Motor neuron (in vitro differentiated cells): ENCODE measurements at regions of chr18 and their contacts with region 1.

Region 1: DNA sequence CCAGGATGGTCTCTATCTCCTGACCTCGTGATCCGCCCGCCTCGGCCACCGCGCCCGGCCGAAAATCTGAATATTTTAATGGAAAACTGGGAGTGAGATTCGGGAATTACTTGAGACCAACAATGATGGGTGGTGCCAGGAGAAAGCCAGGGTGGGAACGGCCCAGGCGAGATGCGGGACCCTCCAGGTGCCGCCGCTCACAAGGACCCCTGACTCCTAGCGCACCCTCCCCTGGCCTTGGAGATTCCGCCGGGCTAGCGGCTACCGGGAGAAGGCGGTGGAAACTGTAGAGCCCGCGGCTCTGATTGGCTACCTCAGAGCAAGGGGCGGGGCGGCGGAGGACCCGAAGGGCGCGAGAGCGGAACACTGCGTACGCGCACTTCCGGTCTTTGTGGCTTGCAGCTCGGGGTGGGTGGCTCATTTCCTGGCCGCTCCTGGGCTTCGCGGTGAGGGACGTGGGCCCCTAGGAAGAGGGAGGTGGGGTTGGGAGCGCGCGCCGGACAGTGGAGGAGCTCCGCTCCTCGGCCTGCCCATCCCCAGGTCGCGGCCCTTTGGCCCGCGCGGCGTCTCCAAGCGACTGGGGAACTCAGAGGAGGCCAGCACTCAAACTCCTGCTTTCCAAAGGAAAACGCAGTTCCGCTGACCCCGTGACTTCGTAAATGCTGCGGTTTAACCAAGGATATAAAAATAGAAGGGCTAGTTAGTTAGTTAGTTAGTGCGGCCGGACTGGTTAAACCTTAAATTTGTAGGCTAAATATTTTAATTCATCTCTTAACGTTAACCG is at the start of gene ZNF397:
- ATAC-seq: peak; percentile 94 to 99 (median 98)
- H3K4me3 ChIP-seq: peak within 1 kb of the TSS; percentile 61 to 97 (median 88)
- H3K27ac ChIP-seq: peak within 1 kb of the TSS; percentile 98 to 99
- H3K4me1 ChIP-seq: peaks cover 10 to 14% of the 10 kb centered on the region in 2 donors
- total RNA-seq, gene ZNF397: 24.1 to 52.5 (median 39.2) TPM

Region 2: DNA sequence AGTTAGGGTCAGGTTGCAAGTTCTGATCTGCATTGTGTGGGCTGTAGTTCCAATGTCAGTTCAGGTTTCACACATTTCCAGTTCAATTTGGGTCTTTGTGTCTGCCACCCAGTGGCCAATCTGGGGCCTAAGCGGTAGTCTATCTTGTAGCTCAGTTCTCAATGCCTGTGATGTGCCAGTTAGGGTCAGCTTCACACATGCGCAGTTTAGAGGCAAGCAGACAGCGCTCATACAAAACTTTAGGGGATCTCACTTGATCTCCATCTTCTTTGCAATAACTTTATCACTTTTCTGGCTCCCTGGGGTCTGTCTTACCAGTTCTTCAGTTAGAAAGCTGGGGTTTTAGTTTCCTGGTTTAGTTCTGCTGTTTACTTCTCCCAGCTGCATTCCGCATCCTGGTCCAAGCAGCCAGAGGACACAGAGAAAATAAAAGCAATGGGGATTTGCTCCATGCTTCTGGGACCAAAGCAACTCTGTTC is 114.3 kb after region 1 on chr18:
- in situ Hi-C with region 1: loop called in 1 of 9 experiments (anchors 25 kb)
- ATAC-seq: peak; percentile 83 to 100 (median 96)
- H3K4me3 ChIP-seq: no peak overlapping the region
- H3K27ac ChIP-seq: no peak overlapping the region
- H3K4me1 ChIP-seq: no peaks in the 10 kb centered on the region